Right ventricle myocardium inferior (tissue), 1 donor: ENCODE measurements at regions of chr14 and their contacts with region 1.

Region 1: DNA sequence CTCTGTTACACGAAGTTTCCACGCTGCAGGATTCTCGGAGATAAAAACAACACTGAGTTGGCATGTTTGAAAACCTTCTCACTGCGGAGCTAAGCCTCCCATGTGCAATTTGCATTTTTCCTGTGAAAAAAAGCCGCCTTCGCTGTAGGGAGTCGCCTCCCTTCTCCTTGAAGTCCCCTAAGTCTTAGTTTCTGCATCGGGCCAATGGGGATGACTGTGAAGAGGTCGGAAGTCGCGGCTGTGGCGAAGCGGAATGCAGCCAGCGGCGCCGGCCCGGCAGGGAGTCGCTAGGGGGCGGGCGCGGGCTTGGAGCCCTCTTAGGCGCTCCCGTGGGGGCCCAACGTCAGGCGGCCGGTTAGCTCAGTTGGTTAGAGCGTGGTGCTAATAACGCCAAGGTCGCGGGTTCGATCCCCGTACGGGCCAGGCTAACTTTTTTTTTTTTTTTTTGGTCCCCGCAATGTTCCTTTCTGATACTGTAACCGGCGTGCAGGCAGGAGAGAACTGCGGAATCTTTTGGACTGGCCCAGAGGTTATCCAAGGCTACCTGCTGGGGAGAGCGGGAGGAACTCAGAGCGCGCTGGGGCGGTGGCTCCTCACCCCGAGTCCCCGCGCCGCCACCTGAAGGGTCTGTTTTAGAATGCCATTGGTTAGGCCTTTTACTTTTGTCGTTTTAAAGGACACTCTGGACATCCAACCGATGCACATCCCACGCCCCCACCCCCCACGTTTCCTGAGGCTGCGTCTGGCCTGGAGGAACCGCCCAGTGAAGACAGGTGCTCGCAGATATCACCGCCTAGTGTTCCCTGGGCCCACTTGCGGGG is 2.6 kb upstream of the ZNF839 start:
- DNase-seq: peak; percentile 96
- ATAC-seq: peak; percentile 85

Region 2: GRCh38 chr14:101707068-101707842 is 609.7 kb before region 1 on chr14:
- intact Hi-C with region 1: loop called (anchors 10 kb)
- DNase-seq: no peak
- ATAC-seq: peak; percentile 66

Region 3: DNA sequence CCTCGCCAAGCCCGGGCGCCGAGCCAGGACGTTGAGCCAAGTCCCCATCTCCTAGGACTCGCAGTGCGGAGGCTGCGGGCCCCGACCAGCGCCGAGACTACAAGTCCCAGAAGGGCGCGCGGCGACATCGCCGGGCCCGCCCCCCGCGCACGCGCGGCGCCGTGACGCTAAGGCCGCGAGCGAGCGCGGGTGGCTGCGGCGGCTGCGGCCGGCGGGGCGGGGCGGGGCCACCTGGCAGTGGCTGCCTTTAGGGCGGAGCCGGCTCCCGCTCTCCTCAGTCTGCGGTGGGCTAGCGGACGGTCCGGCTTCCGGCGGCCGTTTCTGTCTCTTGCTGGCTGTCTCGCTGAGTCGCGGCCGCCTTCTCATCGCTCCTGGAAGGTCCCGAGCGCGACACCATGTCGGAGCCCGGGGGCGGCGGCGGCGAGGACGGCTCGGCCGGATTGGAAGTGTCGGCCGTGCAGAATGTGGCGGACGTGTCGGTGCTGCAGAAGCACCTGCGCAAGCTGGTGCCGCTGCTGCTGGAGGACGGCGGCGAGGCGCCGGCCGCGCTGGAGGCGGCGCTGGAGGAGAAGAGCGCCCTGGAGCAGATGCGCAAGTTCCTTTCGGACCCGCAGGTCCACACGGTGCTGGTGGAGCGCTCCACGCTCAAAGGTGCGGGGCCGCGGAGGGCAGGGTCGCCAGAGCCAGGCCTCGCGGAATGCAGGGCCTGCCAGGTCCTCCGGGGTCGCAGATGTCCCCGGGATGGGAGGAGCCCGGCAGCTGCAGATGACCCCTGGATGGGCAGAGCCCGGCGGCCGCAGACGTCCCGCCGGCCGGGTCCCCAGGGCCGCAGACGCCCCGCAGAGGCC is 352.4 kb before region 1 on chr14 and contains the start of gene DYNC1H1:
- intact Hi-C with region 1: loop called (anchors 5 kb)
- DNase-seq: peak; percentile 98
- ATAC-seq: peak; percentile 93
- total RNA-seq, gene DYNC1H1: 348 TPM

Region 4: GRCh38 chr14:102125546-102125945 is 191.4 kb before region 1 on chr14:
- intact Hi-C with region 1: no loop called
- DNase-seq: no peak
- ATAC-seq: no peak

Region 5: GRCh38 chr14:102139248-102140026 is 177.5 kb before region 1 on chr14 and contains the start of gene WDR20:
- intact Hi-C with region 1: loop called (anchors 10 kb)
- DNase-seq: peak; percentile 99
- ATAC-seq: peak; percentile 100
- total RNA-seq, gene WDR20: 20.5 TPM

Region 6: DNA sequence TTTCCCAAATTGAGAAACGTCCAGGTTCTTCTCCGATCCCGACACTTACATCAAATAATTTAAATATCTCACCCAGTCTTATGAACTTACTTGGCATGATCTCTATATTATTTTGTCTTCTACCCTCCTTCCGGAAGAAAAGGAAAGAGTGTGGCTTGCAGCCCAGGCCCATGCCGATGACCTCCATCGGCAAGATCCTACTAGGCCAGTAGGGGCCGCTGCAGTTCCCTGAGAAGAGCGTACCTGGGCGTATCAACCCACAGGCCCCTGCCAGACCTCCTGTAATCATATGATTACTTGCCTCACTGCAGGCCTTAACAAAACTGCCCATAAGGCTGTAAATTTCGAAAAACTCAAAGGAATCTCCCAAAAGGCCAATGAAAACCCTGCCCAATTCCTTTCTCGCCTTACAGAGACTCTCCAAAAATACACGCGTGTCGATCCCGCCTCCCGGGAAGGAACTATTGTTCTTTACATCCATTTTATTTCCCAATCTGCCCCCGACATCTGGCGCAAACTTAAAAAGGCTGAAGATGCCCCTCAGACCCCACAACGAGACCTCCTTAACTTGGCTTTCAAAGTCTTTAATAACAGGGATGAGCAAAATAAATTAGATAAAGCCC is 81.6 kb before region 1 on chr14:
- intact Hi-C with region 1: loop called (anchors 1 kb)
- DNase-seq: peak; percentile 90
- ATAC-seq: peak; percentile 92

Region 7: GRCh38 chr14:102717276-102717675 is 400.3 kb after region 1 on chr14:
- intact Hi-C with region 1: no loop called
- DNase-seq: no peak
- ATAC-seq: no peak

Region 8: GRCh38 chr14:103108749-103109207 is 791.8 kb after region 1 on chr14:
- intact Hi-C with region 1: no loop called
- DNase-seq: no peak
- ATAC-seq: no peak